Calu3 (cell line): ENCODE measurements at regions of chr17 and their contacts with region 1.

Region 1: DNA sequence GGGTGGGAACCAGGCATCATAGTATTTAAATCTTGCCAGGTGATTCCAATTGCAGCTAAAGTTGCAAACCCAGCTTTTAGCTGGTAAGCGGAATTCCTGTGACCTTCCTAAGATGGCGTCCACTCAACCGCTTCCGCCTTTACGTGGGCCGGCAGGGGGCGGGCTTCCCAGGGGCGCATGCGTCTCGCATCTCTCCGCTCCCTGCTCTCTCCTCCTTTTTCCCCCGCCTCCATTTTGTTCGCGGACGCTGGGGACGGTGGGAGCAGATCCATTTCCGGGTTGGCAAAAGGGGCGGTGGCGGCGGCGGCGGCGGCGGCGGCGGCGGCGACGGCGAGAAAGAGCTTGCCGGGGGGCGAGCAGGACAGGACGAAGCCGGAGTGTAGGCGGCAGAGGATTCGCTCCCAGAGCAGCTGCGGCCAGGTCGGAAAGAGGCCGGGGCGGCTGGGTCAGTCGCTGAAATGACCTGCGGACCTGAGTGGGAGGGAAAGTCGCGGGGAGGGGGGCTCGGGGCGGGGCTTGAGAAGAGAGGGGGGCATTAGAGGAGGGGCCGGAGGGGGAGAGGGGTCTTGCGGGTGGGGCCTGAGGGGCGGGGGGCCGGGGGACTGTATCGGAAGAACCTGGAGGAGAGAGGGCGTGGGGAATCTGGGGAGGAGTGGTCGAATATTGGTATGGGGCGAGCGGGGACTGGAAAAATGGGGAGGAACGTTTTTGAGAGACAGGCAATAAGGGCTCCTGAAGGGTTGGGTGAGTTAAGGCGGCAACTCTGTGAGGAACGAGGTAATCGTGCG is at the start of gene WIPF2:
- DNase-seq: peak; percentile 100
- H3K4me3 Mint-ChIP-seq: peak within 1 kb of the TSS; percentile 78
- H3K27ac Mint-ChIP-seq: peak within 1 kb of the TSS; percentile 36
- H3K4me1 Mint-ChIP-seq: peaks cover 31% of the 10 kb centered on the region
- H3K27me3 Mint-ChIP-seq: no peaks in the 10 kb centered on the region
- CTCF ChIP-seq: no peak
- total RNA-seq, gene WIPF2: 327 and 376 TPM in 2 replicates

Region 2: GRCh38 chr17:39643271-39643670 is 576.0 kb before region 1 on chr17:
- CTCF ChIA-PET with region 1: interaction called, 11 read pairs
- intact Hi-C with region 1: no loop called
- DNase-seq: no peak
- H3K4me3 Mint-ChIP-seq: no peak overlapping the region
- H3K27ac Mint-ChIP-seq: no peak overlapping the region
- H3K4me1 Mint-ChIP-seq: peaks cover 62% of the 10 kb centered on the region
- H3K27me3 Mint-ChIP-seq: no peaks in the 10 kb centered on the region
- CTCF ChIP-seq: no peak

Region 3: GRCh38 chr17:40075201-40075941 is 143.9 kb before region 1 on chr17:
- CTCF ChIA-PET with region 1: interaction called, 17 read pairs
- intact Hi-C with region 1: no loop called
- DNase-seq: peak; percentile 98
- H3K4me3 Mint-ChIP-seq: peak overlapping the region; percentile 14
- H3K27ac Mint-ChIP-seq: peak overlapping the region; percentile 6
- H3K4me1 Mint-ChIP-seq: peaks cover 70% of the 10 kb centered on the region
- H3K27me3 Mint-ChIP-seq: no peaks in the 10 kb centered on the region
- CTCF ChIP-seq: no peak

Region 4: DNA sequence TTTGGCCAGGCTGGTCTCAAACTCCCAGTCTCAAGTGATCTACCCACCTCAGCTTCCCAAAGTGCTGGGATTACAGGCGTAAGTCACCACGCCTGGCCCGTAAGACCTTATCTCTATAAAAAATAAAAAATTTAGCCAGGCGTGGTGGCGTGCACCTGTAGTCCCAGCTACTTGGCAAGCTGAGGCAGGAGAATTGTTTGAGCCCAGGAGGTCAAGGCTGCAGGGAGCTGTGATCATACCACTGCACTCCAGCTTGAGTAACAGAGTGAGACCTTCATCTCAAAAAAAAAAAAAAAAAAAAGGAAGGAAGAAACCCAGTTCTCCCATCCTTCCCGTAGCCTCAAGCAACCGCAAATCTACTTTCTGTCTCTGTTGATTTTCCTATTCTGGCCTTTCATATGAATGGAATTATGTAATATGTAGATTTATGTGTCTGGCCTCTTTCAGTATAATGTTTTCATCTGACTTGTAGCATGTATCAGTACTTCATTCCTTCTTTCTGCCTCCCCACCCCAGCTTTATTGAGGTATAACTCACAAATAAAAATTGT is 67.8 kb before region 1 on chr17:
- CTCF ChIA-PET with region 1: interaction called, 16 read pairs
- intact Hi-C with region 1: no loop called
- DNase-seq: no peak
- H3K4me3 Mint-ChIP-seq: no peak overlapping the region
- H3K27ac Mint-ChIP-seq: no peak overlapping the region
- H3K4me1 Mint-ChIP-seq: peaks cover 5% of the 10 kb centered on the region
- H3K27me3 Mint-ChIP-seq: no peaks in the 10 kb centered on the region
- CTCF ChIP-seq: no peak

Region 5: GRCh38 chr17:40203131-40203530 is 16.1 kb before region 1 on chr17:
- CTCF ChIA-PET with region 1: interaction called, 116 read pairs
- intact Hi-C with region 1: no loop called
- DNase-seq: no peak
- H3K4me3 Mint-ChIP-seq: no peak overlapping the region
- H3K27ac Mint-ChIP-seq: no peak overlapping the region
- H3K4me1 Mint-ChIP-seq: peaks cover 7% of the 10 kb centered on the region
- H3K27me3 Mint-ChIP-seq: no peaks in the 10 kb centered on the region
- CTCF ChIP-seq: no peak

Region 6: GRCh38 chr17:40264458-40265185 is 45.4 kb after region 1 on chr17:
- CTCF ChIA-PET with region 1: interaction called, 40 read pairs
- intact Hi-C with region 1: loop called (anchors 1 kb)
- DNase-seq: no peak
- H3K4me3 Mint-ChIP-seq: no peak overlapping the region
- H3K27ac Mint-ChIP-seq: no peak overlapping the region
- H3K4me1 Mint-ChIP-seq: no peaks in the 10 kb centered on the region
- H3K27me3 Mint-ChIP-seq: no peaks in the 10 kb centered on the region
- CTCF ChIP-seq: no peak

Region 7: DNA sequence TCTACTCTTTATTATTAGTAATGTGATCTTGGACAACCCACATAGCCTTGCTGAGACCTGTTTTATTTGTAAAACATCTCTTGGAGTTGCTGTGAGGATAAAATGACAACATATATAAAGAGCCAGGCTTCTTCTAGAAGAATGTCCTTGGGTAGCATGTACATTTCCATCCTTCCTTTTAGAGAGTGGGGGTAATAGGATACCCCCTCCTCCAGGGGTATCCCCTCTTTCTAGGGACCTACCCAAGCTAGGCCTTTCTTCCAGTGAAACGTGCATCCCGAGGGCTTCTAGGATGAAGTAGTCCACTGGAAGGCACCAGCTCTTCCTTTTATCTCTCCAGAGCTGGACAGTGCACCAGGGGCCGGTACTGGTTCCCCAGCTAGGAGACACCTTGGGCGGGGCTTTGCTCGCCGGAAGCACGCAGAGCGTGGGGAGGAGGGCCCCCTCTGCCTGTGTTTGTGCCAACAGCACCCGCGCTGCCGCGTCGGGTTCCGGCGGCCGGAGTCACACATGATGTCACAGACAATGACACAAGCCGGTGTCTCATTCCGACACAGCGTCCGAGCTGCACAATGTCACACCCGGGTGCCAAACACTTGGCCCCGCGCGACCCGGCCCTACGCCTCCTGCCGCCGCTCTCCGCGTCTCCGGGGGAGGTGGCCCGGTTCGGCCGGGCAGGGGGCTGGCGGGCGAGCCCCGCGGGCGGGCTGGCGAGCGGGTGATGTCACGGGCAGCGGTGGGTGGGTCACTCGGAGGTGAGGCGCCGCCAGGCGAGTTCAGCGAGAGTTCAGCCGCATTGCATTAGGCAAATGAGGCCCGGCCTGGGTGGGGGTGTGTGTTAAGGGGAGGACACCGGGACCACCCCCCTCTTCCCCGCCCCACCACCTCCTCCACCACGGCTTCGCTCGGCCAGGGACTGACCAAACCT is 121.9 kb after region 1 on chr17:
- CTCF ChIA-PET with region 1: interaction called, 16 read pairs
- intact Hi-C with region 1: no loop called
- DNase-seq: peak; percentile 100
- H3K4me3 Mint-ChIP-seq: peak overlapping the region; percentile 89
- H3K27ac Mint-ChIP-seq: peak overlapping the region; percentile 75
- H3K4me1 Mint-ChIP-seq: peaks cover 57% of the 10 kb centered on the region
- H3K27me3 Mint-ChIP-seq: no peaks in the 10 kb centered on the region
- CTCF ChIP-seq: peak; percentile 92

Region 8: GRCh38 chr17:40810505-40810904 is 591.2 kb after region 1 on chr17:
- CTCF ChIA-PET with region 1: no interaction called
- intact Hi-C with region 1: no loop called
- DNase-seq: no peak
- H3K4me3 Mint-ChIP-seq: peak overlapping the region; percentile 21
- H3K27ac Mint-ChIP-seq: peak overlapping the region; percentile 0
- H3K4me1 Mint-ChIP-seq: peaks cover 21% of the 10 kb centered on the region
- H3K27me3 Mint-ChIP-seq: peaks cover 50% of the 10 kb centered on the region
- CTCF ChIP-seq: no peak